H1 (cell line): ENCODE measurements at regions of chr3 and their contacts with region 1.

Region 1: DNA sequence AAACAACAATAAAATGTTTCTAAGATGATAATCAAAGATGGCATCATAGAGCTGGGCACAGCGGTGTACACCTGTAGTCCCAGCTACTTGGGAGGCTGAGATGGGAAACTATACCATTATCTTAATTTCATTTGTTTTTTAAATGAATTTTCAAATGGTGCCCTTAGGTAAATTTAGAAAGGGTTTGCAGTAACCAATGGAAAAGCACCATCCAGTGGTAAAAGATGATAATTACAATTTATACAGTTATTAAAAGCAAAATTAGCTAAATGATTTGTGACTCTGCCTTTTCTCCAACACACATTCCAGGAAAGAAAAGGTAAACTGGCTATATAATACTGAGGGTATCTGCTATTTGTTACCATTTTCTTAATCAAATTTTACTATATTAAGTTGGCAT is 14.4 kb upstream of the ANKRD28 start:
- DNase-seq: no peak
- H3K4me3 ChIP-seq: no peak overlapping the region
- H3K27ac ChIP-seq: no peak overlapping the region
- H3K4me1 ChIP-seq: peaks cover 0 to 4% (median 1%) of the 10 kb centered on the region in 4 experiments; a peak in 2 of 7 replicates
- H3K27me3 ChIP-seq: no peaks in the 10 kb centered on the region
- CTCF ChIP-seq: peak in 2 of 3 experiments; percentile 16 to 17; a peak in 2 of 4 replicates
- EP300 ChIP-seq: no peak
- POLR2A ChIP-seq: no peak
- RAD21 ChIP-seq: peak in 1 of 2 experiments; percentile 56

Region 2: GRCh38 chr3:15520185-15520584 is 292.0 kb before region 1 on chr3:
- CTCF ChIA-PET with region 1: no interaction called
- POLR2A ChIA-PET with region 1: no interaction called
- DNase-seq: no peak
- H3K4me3 ChIP-seq: no peak overlapping the region
- H3K27ac ChIP-seq: no peak overlapping the region
- H3K4me1 ChIP-seq: peaks cover 2 to 12% (median 8%) of the 10 kb centered on the region in 4 experiments; a peak in 6 of 7 replicates
- H3K27me3 ChIP-seq: peaks cover 2 to 17% (median 9%) of the 10 kb centered on the region in 4 experiments
- CTCF ChIP-seq: no peak
- EP300 ChIP-seq: no peak
- POLR2A ChIP-seq: no peak
- RAD21 ChIP-seq: no peak

Region 3: DNA sequence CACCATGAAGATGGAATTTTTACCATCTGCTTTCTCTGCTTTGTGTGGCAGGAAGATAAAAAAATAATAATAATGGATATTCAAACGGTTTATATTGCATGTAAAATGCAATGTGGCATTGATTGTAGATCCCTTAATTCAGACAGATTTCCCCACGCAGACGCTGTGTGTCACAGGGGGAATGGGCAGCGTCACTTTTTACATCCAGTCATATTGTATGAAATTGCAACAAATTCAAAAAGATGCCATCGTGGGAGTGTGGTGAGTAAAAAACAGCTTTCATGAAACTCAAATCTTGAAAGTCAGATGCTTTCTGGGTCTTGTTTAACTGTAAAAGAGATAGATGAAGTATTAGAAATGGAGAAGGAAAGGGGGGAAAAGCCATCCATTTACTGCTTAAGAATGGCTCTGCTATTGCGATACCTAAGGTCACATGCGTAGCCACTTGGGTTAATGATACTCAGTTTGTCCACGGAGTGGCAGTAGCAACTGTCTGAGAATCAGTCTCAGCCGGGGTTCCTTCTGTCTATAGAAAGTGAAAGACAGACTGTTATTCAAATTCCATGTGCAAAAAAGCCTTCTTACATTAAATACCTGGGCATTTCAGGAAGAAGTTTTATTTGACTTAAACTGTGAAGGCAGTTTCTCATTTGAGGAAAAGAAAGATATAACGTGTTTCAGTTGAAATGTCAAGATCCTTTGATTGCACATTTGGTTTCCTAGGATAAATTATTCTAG is 182.2 kb before region 1 on chr3:
- CTCF ChIA-PET with region 1: interaction called, 16 read pairs
- POLR2A ChIA-PET with region 1: no interaction called
- DNase-seq: no peak
- H3K4me3 ChIP-seq: no peak overlapping the region
- H3K27ac ChIP-seq: no peak overlapping the region
- H3K4me1 ChIP-seq: peaks cover 13 to 36% (median 26%) of the 10 kb centered on the region in 4 experiments
- H3K27me3 ChIP-seq: no peaks in the 10 kb centered on the region
- CTCF ChIP-seq: peak; percentile 16 to 84 (median 66)
- EP300 ChIP-seq: no peak
- POLR2A ChIP-seq: no peak
- RAD21 ChIP-seq: peak; percentile 85 to 88

Region 4: DNA sequence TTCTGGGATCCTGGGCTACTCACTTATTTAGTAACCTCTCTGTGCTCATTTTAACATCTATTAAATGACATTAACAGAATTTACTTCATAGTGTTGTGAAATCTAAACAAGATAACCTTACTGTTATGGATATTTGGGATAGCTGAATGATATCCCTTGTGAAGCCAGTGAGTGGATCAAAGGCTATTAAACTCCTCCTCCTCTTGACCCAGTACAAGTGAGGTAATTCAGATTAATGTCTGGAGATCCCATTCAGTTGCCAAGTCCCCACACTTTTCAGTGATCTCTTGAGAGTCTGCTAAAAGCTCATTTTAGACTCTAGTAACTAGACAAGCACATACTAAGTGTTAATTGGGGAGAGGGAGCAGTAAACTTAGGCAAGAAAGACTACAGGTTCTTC is 11.9 kb before region 1 on chr3:
- CTCF ChIA-PET with region 1: interaction called, 15 read pairs
- POLR2A ChIA-PET with region 1: interaction called, 7 read pairs
- DNase-seq: no peak
- H3K4me3 ChIP-seq: no peak overlapping the region
- H3K27ac ChIP-seq: no peak overlapping the region
- H3K4me1 ChIP-seq: peaks cover 0 to 7% (median 4%) of the 10 kb centered on the region in 4 experiments; a peak in 4 of 7 replicates
- H3K27me3 ChIP-seq: no peaks in the 10 kb centered on the region
- CTCF ChIP-seq: no peak
- EP300 ChIP-seq: no peak
- POLR2A ChIP-seq: no peak
- RAD21 ChIP-seq: no peak